ENCODE measurements at regions of chr16 and their contacts with region 1.

Region 1: GRCh38 chr16:79845033-79845733 is 244.6 kb upstream of the MAF start:
- DNase-seq: peak; percentile 47
- ATAC-seq: peak; percentile 45
- H3K4me3 Mint-ChIP-seq: no peak overlapping the region
- H3K27ac Mint-ChIP-seq: peak overlapping the region; percentile 74
- H3K4me1 Mint-ChIP-seq: peaks cover 32% of the 10 kb centered on the region
- H3K27me3 Mint-ChIP-seq: peaks cover 10% of the 10 kb centered on the region

Region 2: DNA sequence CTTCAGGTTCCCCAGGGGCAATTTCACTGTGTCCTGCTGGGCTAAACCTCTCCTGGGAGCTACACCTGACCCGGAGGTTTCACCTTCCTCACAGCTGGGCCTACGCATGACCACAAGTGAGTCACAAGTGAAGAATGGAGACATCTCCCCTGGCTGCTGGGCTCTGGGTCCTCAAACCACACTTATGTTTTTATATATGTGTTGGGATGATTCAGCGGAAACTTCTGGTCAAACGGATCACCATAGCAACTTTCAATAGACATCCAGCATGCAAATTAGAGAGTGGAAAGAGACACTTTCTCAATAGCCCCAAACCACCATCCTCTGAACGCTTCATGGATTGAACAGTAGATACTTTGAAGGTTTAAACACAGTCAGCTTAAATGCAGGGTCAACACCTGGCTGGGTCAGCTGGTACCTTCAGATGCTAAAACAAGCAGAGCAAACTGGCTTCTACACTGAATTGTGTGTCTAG is 216.6 kb before region 1 on chr16:
- CTCF ChIA-PET with region 1: no interaction called
- POLR2A ChIA-PET with region 1: no interaction called
- intact Hi-C with region 1: loop called (anchors 1 kb)
- DNase-seq: peak; percentile 86
- ATAC-seq: peak; percentile 94
- H3K4me3 Mint-ChIP-seq: no peak overlapping the region
- H3K27ac Mint-ChIP-seq: peak overlapping the region; percentile 71
- H3K4me1 Mint-ChIP-seq: peaks cover 14% of the 10 kb centered on the region
- H3K27me3 Mint-ChIP-seq: peaks cover 24% of the 10 kb centered on the region

Region 3: DNA sequence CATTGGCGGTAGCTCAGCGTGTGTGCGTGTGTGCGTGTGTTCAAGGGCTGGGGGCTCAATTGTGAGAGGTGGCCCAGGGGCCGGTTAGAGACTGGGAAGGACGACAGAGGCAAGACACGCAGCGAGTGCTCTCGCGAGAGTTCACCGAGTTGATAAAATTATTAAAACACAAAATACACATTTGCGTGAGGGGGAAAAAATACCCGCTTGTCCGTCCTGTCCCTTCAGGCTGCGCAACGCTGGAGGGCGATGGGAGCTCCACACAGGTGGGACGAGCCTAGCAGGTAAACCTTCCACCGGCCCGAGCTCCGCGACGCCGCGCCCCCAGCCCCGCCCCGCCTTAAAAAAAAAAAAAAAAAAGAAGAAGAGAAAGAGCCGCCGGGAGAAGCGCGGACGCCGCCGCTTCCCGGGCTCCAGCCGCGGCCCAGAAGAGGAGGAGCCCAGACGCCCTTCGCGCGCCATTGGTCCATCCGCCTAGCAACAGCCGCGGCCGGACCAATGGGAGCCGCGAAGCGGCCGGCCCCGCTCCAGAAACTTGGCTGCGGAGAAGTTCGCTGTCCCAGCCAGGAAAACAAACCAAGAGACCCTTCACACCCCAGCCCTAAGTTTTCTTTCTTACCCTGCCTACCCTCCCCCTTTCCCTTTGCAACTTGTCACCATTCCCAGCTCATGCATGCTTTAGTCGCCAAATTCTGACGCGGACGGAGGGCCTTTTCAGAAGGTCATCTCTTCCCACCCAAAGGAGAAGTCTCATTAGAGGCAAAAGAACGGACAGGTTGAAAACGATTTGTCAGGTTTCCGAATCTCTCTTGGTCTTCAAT is 74.7 kb before region 1 on chr16:
- CTCF ChIA-PET with region 1: no interaction called
- POLR2A ChIA-PET with region 1: no interaction called
- intact Hi-C with region 1: loop called in 1 of 2 experiments (anchors 1 kb)
- DNase-seq: peak; percentile 88
- ATAC-seq: peak; percentile 100
- H3K4me3 Mint-ChIP-seq: peak overlapping the region; percentile 77
- H3K27ac Mint-ChIP-seq: peak overlapping the region; percentile 83
- H3K4me1 Mint-ChIP-seq: peaks cover 13% of the 10 kb centered on the region
- H3K27me3 Mint-ChIP-seq: peaks cover 3% of the 10 kb centered on the region

Region 4: GRCh38 chr16:80197741-80198201 is 352.6 kb after region 1 on chr16:
- CTCF ChIA-PET with region 1: no interaction called
- POLR2A ChIA-PET with region 1: no interaction called
- intact Hi-C with region 1: loop called in 1 of 2 experiments (anchors 5 kb)
- DNase-seq: peak; percentile 10
- ATAC-seq: peak; percentile 94
- H3K4me3 Mint-ChIP-seq: no peak overlapping the region
- H3K27ac Mint-ChIP-seq: peak overlapping the region; percentile 34
- H3K4me1 Mint-ChIP-seq: peaks cover 14% of the 10 kb centered on the region
- H3K27me3 Mint-ChIP-seq: peaks cover 31% of the 10 kb centered on the region

Measured in activated CD4-positive, alpha-beta T cell treated with anti-CD3 and anti-CD28 coated beads for 36 hours (primary cell).